Activated CD4-positive, alpha-beta T cell treated with anti-CD3 and anti-CD28 coated beads for 36 hours (primary cell): ENCODE measurements at regions of chr20 and their contacts with region 1.

Region 1: GRCh38 chr20:37901654-37902503 is 1.0 kb upstream of the VSTM2L start:
- DNase-seq: peak; percentile 56
- ATAC-seq: no peak
- H3K4me3 Mint-ChIP-seq: peak overlapping the region; percentile 29
- H3K27ac Mint-ChIP-seq: no peak overlapping the region
- H3K4me1 Mint-ChIP-seq: peaks cover 14% of the 10 kb centered on the region
- H3K27me3 Mint-ChIP-seq: peaks cover 49% of the 10 kb centered on the region

Region 2: GRCh38 chr20:37651932-37652331 is 249.9 kb before region 1 on chr20:
- CTCF ChIA-PET with region 1: no interaction called
- POLR2A ChIA-PET with region 1: no interaction called
- intact Hi-C with region 1: loop called (anchors 5 to 10 kb)
- DNase-seq: peak; percentile 70
- ATAC-seq: peak; percentile 94
- H3K4me3 Mint-ChIP-seq: no peak overlapping the region
- H3K27ac Mint-ChIP-seq: no peak overlapping the region
- H3K4me1 Mint-ChIP-seq: no peaks in the 10 kb centered on the region
- H3K27me3 Mint-ChIP-seq: peaks cover 9% of the 10 kb centered on the region

Region 3: GRCh38 chr20:37856932-37857660 is 44.8 kb before region 1 on chr20:
- CTCF ChIA-PET with region 1: no interaction called
- POLR2A ChIA-PET with region 1: no interaction called
- intact Hi-C with region 1: loop called in 1 of 2 experiments (anchors 1 kb)
- DNase-seq: no peak
- ATAC-seq: peak; percentile 58
- H3K4me3 Mint-ChIP-seq: no peak overlapping the region
- H3K27ac Mint-ChIP-seq: peak overlapping the region; percentile 3
- H3K4me1 Mint-ChIP-seq: peaks cover 23% of the 10 kb centered on the region
- H3K27me3 Mint-ChIP-seq: no peaks in the 10 kb centered on the region

Region 4: GRCh38 chr20:37922016-37922415 is 20.1 kb after region 1 on chr20:
- CTCF ChIA-PET with region 1: interaction called, 3 read pairs
- POLR2A ChIA-PET with region 1: no interaction called
- intact Hi-C with region 1: loop called in 1 of 2 experiments (anchors 1 kb)
- DNase-seq: peak; percentile 78
- ATAC-seq: peak; percentile 88
- H3K4me3 Mint-ChIP-seq: no peak overlapping the region
- H3K27ac Mint-ChIP-seq: peak overlapping the region; percentile 40
- H3K4me1 Mint-ChIP-seq: peaks cover 16% of the 10 kb centered on the region
- H3K27me3 Mint-ChIP-seq: peaks cover 8% of the 10 kb centered on the region